ENCODE measurements at regions of chr9 and their contacts with region 1.

Region 1: GRCh38 chr9:133149126-133150107 is 14.3 kb downstream of the GBGT1 start:
- DNase-seq: peak; percentile 92
- H3K4me3 ChIP-seq: peak overlapping the region; percentile 74
- H3K27ac ChIP-seq: peak overlapping the region; percentile 77
- H3K4me1 ChIP-seq: peaks cover 23% of the 10 kb centered on the region
- H3K27me3 ChIP-seq: no peaks in the 10 kb centered on the region
- CTCF ChIP-seq: 0 out of 2 replicates have a peak, but pooled peaks have one; percentile 28

Region 2: GRCh38 chr9:133044661-133045060 is 104.8 kb before region 1 on chr9:
- CTCF ChIA-PET with region 1: no interaction called
- POLR2A ChIA-PET with region 1: no interaction called
- intact Hi-C with region 1: loop called (anchors 5 kb)
- DNase-seq: no peak
- H3K4me3 ChIP-seq: no peak overlapping the region
- H3K27ac ChIP-seq: no peak overlapping the region
- H3K4me1 ChIP-seq: peaks cover 5% of the 10 kb centered on the region
- H3K27me3 ChIP-seq: no peaks in the 10 kb centered on the region
- CTCF ChIP-seq: no peak

Region 3: DNA sequence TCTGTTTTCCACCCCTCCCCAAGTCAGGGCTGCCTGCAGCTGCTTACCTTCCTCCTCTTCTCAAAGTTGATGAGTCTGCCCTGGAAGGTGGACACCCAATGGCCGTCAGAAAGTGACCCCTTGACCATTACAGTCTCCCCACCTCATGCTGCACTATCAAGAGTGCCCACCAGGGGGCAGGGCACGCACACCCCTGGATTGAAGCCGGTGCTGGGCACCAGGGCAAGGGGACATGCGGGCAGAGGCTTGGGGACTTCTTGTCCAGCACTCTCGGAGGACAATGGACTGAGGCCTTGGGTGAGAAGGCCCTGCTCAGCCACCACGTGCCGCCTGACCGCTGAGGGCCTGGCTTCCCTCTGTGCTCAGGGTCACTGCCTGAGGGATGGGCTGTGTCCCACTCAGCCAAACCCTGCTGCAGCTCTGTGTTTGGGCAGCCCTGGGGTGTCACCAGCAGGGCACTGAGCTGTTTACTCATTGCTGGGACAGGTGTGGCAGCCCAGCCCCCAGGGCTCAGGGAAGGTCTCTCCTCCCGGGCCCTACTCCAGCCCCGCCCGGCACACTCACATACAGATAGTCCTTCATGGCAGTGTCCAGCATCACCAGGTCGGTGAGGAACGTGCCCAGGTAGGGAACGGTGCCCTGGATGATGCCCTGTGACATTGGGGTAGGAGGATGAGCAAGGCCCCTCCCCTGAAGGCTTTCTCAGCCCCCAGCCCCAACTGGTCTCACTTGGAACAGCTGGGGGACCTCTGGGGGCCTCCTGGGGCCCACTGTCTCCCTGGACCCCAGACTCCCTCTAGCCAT is 46.0 kb before region 1 on chr9:
- CTCF ChIA-PET with region 1: interaction called, 3 read pairs
- POLR2A ChIA-PET with region 1: no interaction called
- intact Hi-C with region 1: loop called (anchors 1 kb)
- DNase-seq: peak; percentile 26
- H3K4me3 ChIP-seq: no peak overlapping the region
- H3K27ac ChIP-seq: no peak overlapping the region
- H3K4me1 ChIP-seq: no peaks in the 10 kb centered on the region
- H3K27me3 ChIP-seq: no peaks in the 10 kb centered on the region
- CTCF ChIP-seq: peak; percentile 88